ENCODE measurements at regions of chr5 and their contacts with region 1.

Region 1: GRCh38 chr5:54229041-54229780 is 81.2 kb downstream of the ARL15 start:
- DNase-seq: peak; percentile 51 to 61
- ATAC-seq: peak; percentile 87 to 89; a peak in 4 of 6 replicates
- H3K4me3 ChIP-seq: no peak overlapping the region
- H3K27ac ChIP-seq: no peak overlapping the region
- H3K4me1 ChIP-seq: 0 out of 3 replicates have a peak, but pooled peaks cover 3% of the 10 kb centered on the region
- CTCF ChIP-seq: peak; percentile 85
- EP300 ChIP-seq: no peak
- POLR2A ChIP-seq: no peak
- RAD21 ChIP-seq: peak; percentile 79 to 82

Region 2: DNA sequence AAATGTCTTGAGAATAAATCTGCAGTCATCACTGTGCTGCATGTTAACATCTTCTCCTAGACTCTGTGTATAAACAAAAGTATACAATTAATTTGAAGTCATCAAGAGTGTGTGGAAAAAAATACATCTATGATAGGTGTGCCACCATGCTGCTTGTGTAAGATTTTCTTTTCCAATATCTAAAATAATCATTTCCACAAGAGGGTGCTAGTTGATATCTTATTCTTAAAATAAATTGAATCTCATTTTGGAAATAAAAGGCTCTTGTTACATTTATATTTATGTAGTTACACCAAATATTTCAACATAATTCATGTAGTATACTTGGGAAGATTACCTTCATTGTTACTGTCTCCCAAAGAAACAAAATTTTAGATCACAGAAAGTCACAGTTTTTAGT is 1105.5 kb before region 1 on chr5:
- CTCF ChIA-PET with region 1: interaction called, 11 read pairs
- POLR2A ChIA-PET with region 1: no interaction called
- DNase-seq: peak in 1 of 2 experiments; percentile 10
- ATAC-seq: no peak
- H3K4me3 ChIP-seq: no peak overlapping the region
- H3K27ac ChIP-seq: no peak overlapping the region
- H3K4me1 ChIP-seq: 0 out of 3 replicates have a peak, but pooled peaks cover 5% of the 10 kb centered on the region
- CTCF ChIP-seq: peak; percentile 44
- EP300 ChIP-seq: no peak
- POLR2A ChIP-seq: no peak
- RAD21 ChIP-seq: peak; percentile 52 to 62; a peak in 4 of 5 replicates

Region 3: DNA sequence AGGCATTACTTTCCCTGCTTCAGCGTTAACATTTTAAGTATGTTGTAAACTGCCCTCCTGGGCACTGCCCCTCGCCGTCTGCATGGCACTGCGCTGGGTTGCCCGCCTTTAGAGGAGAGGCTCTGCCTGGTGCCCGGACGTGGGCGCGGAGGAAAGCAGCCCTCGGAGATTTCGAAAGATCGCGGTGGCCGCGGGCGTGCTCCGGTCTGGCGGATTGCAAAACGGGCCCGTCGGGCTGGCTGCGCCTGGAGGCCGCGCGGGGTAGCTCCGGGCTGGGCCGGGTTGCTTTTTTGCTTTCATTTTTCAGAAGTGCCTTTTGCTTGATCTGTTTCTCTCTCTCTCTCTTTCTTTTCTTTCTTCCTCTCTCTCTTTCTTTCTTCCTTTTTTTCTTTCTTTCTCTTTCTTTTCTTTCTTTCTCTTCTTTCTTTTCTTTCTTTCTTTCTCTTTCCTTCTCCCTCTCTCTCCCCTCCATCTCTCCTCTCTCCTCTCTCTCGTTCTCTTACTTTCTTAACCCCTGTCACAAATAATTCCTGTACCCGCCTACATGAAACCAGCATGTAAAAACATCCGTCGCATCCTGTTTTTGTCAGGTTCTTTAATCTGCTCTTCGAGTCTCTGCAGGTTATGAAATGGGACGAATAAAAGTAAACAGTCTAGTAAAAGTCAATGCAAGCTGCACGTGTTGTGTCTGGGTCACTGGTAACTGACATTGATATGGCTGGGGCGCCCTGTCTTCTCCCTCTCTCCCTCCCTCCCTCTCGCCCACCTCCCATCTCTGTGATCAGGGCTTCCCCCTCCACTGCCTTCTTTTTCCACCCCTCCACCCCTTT is 747.1 kb before region 1 on chr5:
- CTCF ChIA-PET with region 1: interaction called, 13 read pairs
- POLR2A ChIA-PET with region 1: no interaction called
- DNase-seq: peak; percentile 64 to 66
- ATAC-seq: peak; percentile 56 to 74
- H3K4me3 ChIP-seq: peak overlapping the region; percentile 61
- H3K27ac ChIP-seq: peak overlapping the region; percentile 47 to 73
- H3K4me1 ChIP-seq: peaks cover 8% of the 10 kb centered on the region; the same call in 1 of the 3 replicates
- CTCF ChIP-seq: no peak
- EP300 ChIP-seq: no peak
- POLR2A ChIP-seq: no peak
- RAD21 ChIP-seq: peak; percentile 13 to 22; a peak in 1 of 5 replicates

Measured in A549 (cell line).